A549 (cell line): ENCODE measurements at regions of chrX and their contacts with region 1.

Region 1: DNA sequence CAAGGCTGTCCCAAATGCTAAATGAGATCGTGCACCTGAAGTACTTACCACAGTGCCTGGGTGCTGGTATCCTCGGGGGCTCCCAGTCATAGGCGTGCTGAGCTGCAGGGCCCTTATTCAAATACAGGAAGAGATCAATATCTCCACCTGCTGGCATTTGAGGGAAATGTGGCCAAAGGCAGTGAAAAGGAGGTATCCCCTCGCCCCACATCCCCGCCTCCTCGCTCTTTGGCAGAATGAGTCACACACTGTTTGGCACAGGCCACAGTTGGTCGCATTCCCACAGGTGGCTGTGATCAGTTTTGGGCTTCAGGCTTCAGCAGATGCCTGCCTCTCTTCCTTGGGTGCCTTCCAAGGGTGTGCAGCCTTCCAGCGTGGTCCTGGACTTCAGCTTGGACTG is 28.4 kb downstream of the ZNF185 start:
- DNase-seq: peak; percentile 64 to 75
- ATAC-seq: peak; percentile 77 to 93
- H3K4me3 ChIP-seq: no peak overlapping the region
- H3K27ac ChIP-seq: no peak overlapping the region
- H3K4me1 ChIP-seq: 0 out of 3 replicates have a peak, but pooled peaks cover 6% of the 10 kb centered on the region
- CTCF ChIP-seq: peak; percentile 49
- EP300 ChIP-seq: no peak
- POLR2A ChIP-seq: no peak
- RAD21 ChIP-seq: peak; percentile 51 to 57

Region 2: DNA sequence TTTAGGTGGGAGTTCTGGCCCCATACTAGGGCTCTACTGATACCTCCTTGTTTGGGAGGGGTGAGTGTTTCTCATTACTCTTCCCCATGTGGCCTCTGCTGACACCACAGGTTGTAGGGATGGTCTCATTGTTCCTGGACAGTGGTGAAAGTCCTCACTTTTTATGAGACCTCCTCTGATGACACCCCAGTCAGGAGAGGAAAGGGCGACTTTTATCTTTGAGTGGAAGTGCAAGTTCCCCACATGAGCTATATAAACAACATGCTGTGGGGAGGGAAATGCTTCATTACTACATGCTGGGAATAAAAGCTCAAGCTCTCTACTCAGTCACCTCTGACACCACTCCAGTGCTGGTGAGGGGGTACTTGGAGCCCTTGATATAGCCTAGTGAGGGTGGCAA is 127.3 kb before region 1 on chrX:
- CTCF ChIA-PET with region 1: no interaction called
- POLR2A ChIA-PET with region 1: no interaction called
- DNase-seq: no peak
- ATAC-seq: no peak
- H3K4me3 ChIP-seq: no peak overlapping the region
- H3K27ac ChIP-seq: no peak overlapping the region
- H3K4me1 ChIP-seq: no peaks in the 10 kb centered on the region
- CTCF ChIP-seq: no peak
- EP300 ChIP-seq: no peak
- POLR2A ChIP-seq: no peak
- RAD21 ChIP-seq: no peak

Region 3: GRCh38 chrX:152915527-152916241 is 10.6 kb before region 1 on chrX:
- CTCF ChIA-PET with region 1: interaction called, 30 read pairs
- POLR2A ChIA-PET with region 1: no interaction called
- DNase-seq: peak; percentile 37 to 51
- ATAC-seq: peak; percentile 69 to 86
- H3K4me3 ChIP-seq: no peak overlapping the region
- H3K27ac ChIP-seq: peak overlapping the region; percentile 21 to 62; a peak in 2 of 6 replicates
- H3K4me1 ChIP-seq: peaks cover 9% of the 10 kb centered on the region; the same call in 2 of the 3 replicates
- CTCF ChIP-seq: peak; percentile 45
- EP300 ChIP-seq: no peak
- POLR2A ChIP-seq: no peak
- RAD21 ChIP-seq: peak; percentile 21 to 45; a peak in 2 of 5 replicates